Activated CD4-positive, alpha-beta T cell treated with anti-CD3 and anti-CD28 coated beads, Interleukin-2, amount 10 ng/mL, durations not matched to agents 7 days and 5 days (primary cell): ENCODE measurements at regions of chr6 and their contacts with region 1.

Region 1: GRCh38 chr6:13811627-13812358 is 2.6 kb downstream of the MCUR1 start:
- DNase-seq: no peak
- H3K4me3 Mint-ChIP-seq: peak overlapping the region; percentile 88
- H3K27ac Mint-ChIP-seq: no peak overlapping the region
- H3K4me1 Mint-ChIP-seq: peaks cover 29% of the 10 kb centered on the region
- H3K27me3 Mint-ChIP-seq: no peaks in the 10 kb centered on the region

Region 2: GRCh38 chr6:13795041-13795750 is 16.6 kb before region 1 on chr6:
- CTCF ChIA-PET with region 1: interaction called, 10 read pairs
- POLR2A ChIA-PET with region 1: no interaction called
- DNase-seq: peak; percentile 91
- H3K4me3 Mint-ChIP-seq: no peak overlapping the region
- H3K27ac Mint-ChIP-seq: no peak overlapping the region
- H3K4me1 Mint-ChIP-seq: peaks cover 22% of the 10 kb centered on the region
- H3K27me3 Mint-ChIP-seq: no peaks in the 10 kb centered on the region

Region 3: GRCh38 chr6:13924146-13924948 is 112.6 kb after region 1 on chr6:
- CTCF ChIA-PET with region 1: no interaction called
- POLR2A ChIA-PET with region 1: no interaction called
- DNase-seq: no peak
- H3K4me3 Mint-ChIP-seq: peak overlapping the region; percentile 71
- H3K27ac Mint-ChIP-seq: no peak overlapping the region
- H3K4me1 Mint-ChIP-seq: peaks cover 12% of the 10 kb centered on the region
- H3K27me3 Mint-ChIP-seq: peaks cover 66% of the 10 kb centered on the region

Region 4: GRCh38 chr6:14216946-14217684 is 405.3 kb after region 1 on chr6:
- CTCF ChIA-PET with region 1: no interaction called
- POLR2A ChIA-PET with region 1: no interaction called
- DNase-seq: no peak
- H3K4me3 Mint-ChIP-seq: no peak overlapping the region
- H3K27ac Mint-ChIP-seq: no peak overlapping the region
- H3K4me1 Mint-ChIP-seq: peaks cover 9% of the 10 kb centered on the region
- H3K27me3 Mint-ChIP-seq: no peaks in the 10 kb centered on the region